WTC11 (cell line): ENCODE measurements at regions of chr22 and their contacts with region 1.

Region 1: GRCh38 chr22:31661851-31662656 is at the start of gene PISD:
- DNase-seq: peak; percentile 98
- ATAC-seq: peak; percentile 96
- H3K4me3 Mint-ChIP-seq: peak within 1 kb of the TSS; percentile 99
- H3K27ac Mint-ChIP-seq: peak within 1 kb of the TSS; percentile 99
- H3K4me1 Mint-ChIP-seq: peaks cover 12% of the 10 kb centered on the region
- H3K27me3 Mint-ChIP-seq: peaks cover 3% of the 10 kb centered on the region; the same call in 1 of the 2 replicates
- CTCF ChIP-seq: no peak
- total RNA-seq, gene PISD: 49.4 to 55.7 TPM (median 50.3 TPM) in 3 replicates

Region 2: GRCh38 chr22:31630331-31631329 is 31.4 kb before region 1 on chr22:
- CTCF ChIA-PET with region 1: interaction called, 14 read pairs
- POLR2A ChIA-PET with region 1: interaction called, 8 read pairs
- DNase-seq: peak; percentile 86
- ATAC-seq: peak; percentile 78
- H3K4me3 Mint-ChIP-seq: peak overlapping the region; percentile 85
- H3K27ac Mint-ChIP-seq: peak overlapping the region; percentile 68; the same call in 1 of the 2 replicates
- H3K4me1 Mint-ChIP-seq: peaks cover 31% of the 10 kb centered on the region
- H3K27me3 Mint-ChIP-seq: no peaks in the 10 kb centered on the region
- CTCF ChIP-seq: no peak

Region 3: DNA sequence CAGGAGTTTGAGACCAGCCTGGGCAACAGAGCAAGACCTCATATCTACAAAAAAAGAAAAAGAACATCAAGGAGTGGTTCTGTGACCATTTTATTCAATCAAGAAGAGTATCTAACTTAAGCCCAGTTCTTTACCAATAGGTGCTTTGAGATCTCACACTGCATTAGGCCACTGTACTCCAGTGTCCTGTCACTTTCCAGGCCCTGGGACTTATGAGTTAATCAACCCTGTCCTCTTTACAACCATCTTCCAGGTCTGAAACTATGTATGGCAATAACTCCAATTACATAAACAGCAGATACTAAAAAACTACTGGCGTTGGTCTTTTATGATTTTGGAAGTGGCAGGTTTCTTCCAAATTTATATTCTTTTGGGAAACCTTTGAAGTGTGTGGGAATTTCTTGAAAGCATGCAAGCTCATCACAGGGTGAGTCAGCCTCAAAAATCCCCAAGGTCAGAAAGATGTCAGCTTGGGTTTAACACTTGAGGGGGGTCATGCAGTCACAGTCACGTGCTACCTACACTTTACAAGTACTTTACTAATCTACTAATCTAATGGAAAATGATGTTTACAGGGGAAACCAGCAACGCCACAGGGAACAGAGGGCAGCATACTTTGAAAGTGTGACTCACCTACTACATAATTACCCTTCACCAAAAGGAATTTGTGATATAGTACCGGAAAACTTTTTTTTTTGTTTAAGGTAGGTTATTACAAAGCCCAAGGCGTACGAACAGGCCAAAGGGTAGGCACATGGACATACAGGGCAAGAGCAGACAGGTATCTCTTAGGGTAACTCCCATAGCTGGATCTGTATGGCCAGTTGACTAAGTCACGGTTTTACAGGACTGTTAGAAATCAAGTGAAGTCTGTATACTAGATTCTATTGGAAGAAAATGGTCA is 15.6 kb before region 1 on chr22:
- CTCF ChIA-PET with region 1: interaction called, 13 read pairs
- POLR2A ChIA-PET with region 1: no interaction called
- DNase-seq: no peak
- ATAC-seq: no peak
- H3K4me3 Mint-ChIP-seq: no peak overlapping the region
- H3K27ac Mint-ChIP-seq: peak overlapping the region; percentile 8; the same call in 1 of the 2 replicates
- H3K4me1 Mint-ChIP-seq: peaks cover 15% of the 10 kb centered on the region
- H3K27me3 Mint-ChIP-seq: no peaks in the 10 kb centered on the region
- CTCF ChIP-seq: no peak

Region 4: DNA sequence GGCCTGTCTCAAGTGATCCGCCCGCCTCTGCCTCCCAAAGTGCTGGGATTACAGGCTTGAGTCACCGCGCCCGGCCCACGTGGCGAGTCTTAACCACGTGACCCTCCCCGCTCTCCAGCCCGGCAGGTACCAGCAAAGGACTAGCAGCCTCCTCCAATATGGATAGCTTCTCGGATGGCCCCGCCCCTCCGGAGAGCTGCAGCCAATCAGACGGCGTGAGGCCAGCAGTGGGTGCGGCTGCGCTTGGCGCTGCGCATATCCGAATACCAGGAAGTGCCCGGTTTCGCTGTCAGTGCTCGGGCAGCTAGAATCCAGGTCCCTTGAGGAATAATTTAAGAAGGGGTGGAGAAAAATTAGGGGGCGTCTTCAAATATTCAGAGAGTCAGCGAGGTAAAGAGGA is 14.6 kb after region 1 on chr22:
- CTCF ChIA-PET with region 1: interaction called, 46 read pairs
- POLR2A ChIA-PET with region 1: interaction called, 4 read pairs
- DNase-seq: peak; percentile 94
- ATAC-seq: peak; percentile 100
- H3K4me3 Mint-ChIP-seq: peak overlapping the region; percentile 68
- H3K27ac Mint-ChIP-seq: peak overlapping the region; percentile 34; the same call in 1 of the 2 replicates
- H3K4me1 Mint-ChIP-seq: no peaks in the 10 kb centered on the region; the same call in 1 of the 2 replicates
- H3K27me3 Mint-ChIP-seq: peaks cover 12% of the 10 kb centered on the region
- CTCF ChIP-seq: no peak

Region 5: DNA sequence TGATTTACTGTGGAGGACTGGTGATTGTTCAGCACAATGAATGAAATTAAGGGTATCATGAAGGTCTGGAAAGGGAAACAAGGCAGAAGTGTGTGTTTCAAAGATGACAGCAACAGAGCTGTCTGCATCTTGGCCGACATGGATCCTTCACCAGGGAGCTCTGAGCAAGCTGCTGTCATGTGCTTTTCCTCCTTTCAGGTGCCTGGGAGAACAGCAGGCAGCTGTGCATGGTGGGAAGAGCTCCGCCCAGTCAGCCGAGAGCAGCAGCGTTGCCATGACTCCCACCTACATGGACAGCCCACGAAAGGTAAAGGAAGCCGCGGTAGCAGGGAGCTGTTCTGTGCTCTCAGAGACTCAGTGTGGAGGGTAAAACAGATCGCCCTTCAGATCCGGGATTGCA is 195.2 kb after region 1 on chr22:
- CTCF ChIA-PET with region 1: interaction called, 10 read pairs
- POLR2A ChIA-PET with region 1: interaction called, 3 read pairs
- DNase-seq: peak; percentile 76
- ATAC-seq: peak; percentile 100
- H3K4me3 Mint-ChIP-seq: no peak overlapping the region; the same call in 1 of the 2 replicates
- H3K27ac Mint-ChIP-seq: peak overlapping the region; percentile 37
- H3K4me1 Mint-ChIP-seq: peaks cover 10% of the 10 kb centered on the region
- H3K27me3 Mint-ChIP-seq: no peaks in the 10 kb centered on the region
- CTCF ChIP-seq: no peak